ENCODE measurements at regions of chr22 and their contacts with region 1.

Region 1: DNA sequence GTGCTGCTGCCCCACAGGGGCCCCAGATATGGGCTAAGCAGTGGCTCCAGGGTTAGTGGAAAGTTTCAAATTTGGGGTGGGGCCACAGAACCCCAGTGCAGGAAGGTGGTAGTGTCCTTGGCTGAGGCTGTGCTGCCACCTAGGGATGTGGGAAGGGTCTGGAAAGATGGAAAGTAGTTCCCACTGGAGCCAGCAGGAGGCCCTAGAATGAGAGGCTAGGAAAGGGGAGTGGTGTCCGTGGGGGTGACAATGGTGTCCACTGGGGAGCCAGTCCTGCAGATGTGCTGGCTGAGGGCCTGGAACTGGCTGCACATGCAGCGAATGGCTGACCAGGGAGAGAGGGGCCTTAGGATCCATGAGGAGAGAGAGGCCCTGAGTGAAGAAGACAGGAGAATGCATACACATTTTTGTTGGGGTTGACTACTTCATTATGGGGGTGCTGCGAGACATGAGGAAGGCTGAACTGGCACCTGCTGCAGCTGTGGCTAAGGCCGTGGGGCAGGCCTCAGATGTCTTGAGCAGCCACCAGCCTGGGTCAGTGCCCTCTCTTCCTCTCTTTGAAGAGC is 21.1 kb downstream of the RFPL3 start:
- DNase-seq: no peak

Region 2: GRCh38 chr22:32325416-32325801 is 53.4 kb before region 1 on chr22:
- intact Hi-C with region 1: loop called in 1 of 2 experiments (anchors 5 kb)
- DNase-seq: peak; percentile 69

Region 3: DNA sequence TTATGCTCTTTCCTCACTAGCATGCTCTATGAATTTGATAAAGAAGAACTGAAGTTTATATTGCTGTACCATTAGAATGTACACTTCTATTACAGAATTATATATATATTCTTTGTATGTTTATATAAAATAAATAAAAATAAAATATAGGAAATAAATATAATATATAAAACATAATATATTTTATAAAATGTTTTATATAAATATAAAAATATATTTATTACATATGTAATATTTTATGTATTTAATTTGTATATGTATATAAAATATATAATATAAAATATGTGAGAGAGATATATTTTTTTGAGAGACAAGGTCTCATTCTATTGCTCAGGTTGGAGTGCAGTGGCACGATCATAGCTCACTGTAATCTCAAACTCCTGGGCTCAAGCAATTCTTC is 51.6 kb after region 1 on chr22:
- intact Hi-C with region 1: loop called in 1 of 2 experiments (anchors 10 kb)
- DNase-seq: no peak

Measured in posterior vena cava (tissue), 2 donors.